PC-9 (cell line): ENCODE measurements at regions of chr2 and their contacts with region 1.

Region 1: GRCh38 chr2:218828478-218829177 is 3.0 kb downstream of the PRKAG3 start:
- DNase-seq: no peak
- H3K4me3 ChIP-seq: no peak overlapping the region
- H3K27ac ChIP-seq: no peak overlapping the region
- H3K4me1 ChIP-seq: peaks cover 23% of the 10 kb centered on the region
- H3K27me3 ChIP-seq: no peaks in the 10 kb centered on the region; the same call in 1 of the 2 replicates
- CTCF ChIP-seq: no peak

Region 2: DNA sequence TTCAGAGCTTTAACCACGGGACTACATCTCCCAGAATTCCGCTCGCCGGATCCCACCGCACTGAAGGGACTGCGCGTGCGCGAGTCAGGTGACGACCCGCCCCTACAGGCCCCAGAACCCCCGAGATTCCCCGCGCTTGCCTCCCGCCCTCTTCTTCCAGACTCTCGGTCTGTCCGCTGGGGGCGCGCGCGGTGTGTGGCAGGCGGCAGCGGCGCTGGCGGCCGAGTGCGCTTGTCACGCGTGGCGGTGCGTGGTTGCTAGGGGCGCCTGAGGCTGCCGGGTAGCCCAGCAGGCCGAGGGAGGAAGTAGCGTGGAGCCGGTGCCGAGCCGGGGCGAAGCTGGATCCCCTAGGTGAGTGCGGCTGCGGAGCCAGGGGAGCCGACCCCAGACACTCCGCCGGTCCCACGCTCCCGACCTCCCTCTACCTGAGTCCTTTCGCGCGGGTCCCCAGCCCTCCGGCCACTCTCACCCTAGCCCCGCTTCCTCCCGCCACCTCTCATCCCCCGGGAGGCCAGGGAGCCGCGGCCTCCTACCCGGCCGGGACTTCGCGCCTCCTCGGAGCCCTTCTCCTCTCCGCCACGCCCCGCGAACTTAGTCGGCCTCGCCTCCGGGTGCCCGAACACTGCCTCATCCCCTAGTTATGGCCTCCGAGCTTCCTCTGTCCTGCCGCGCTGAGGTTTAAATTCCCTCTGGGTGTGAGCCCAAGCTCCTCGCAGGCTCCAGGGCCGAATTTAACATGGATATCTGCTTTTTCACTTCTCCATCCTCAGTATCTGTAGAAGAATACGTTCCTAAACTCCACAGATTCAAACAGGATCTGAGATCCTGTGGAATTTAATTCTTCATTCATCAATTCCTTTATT is 117.7 kb before region 1 on chr2 and contains the start of gene TTLL4:
- CTCF ChIA-PET with region 1: no interaction called
- POLR2A ChIA-PET with region 1: interaction called, 10 read pairs
- intact Hi-C with region 1: no loop called
- DNase-seq: peak; percentile 79 to 96
- H3K4me3 ChIP-seq: peak within 1 kb of the TSS; percentile 95
- H3K27ac ChIP-seq: peak within 1 kb of the TSS; percentile 55
- H3K4me1 ChIP-seq: peaks cover 13% of the 10 kb centered on the region
- H3K27me3 ChIP-seq: no peaks in the 10 kb centered on the region
- CTCF ChIP-seq: peak; percentile 79
- total RNA-seq, gene TTLL4: 43.9 and 57.1 TPM in 2 replicates